Left ventricle myocardium inferior (tissue), 1 donor: ENCODE measurements at regions of chr5 and their contacts with region 1.

Region 1: DNA sequence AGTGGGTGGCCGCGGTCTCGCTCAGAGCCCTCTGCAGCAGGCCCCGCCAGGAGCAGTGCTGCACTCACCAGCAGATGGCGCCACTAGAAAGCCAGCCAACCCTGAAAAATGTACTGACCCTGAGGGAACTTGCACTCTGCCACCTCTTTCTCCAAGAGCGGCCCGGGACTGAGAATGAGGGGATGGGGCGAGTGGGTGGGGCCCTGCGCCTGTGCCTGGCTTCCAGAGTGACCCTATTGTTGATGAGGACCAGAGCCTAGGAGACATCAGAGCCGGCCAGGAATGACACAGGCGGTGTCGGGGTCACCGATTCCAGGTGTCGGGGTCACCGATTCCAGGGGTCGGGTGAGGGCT is 2.9 kb upstream of the IL17B start:
- DNase-seq: peak; percentile 81
- H3K4me3 ChIP-seq: peak overlapping the region; percentile 20
- H3K27ac ChIP-seq: peak overlapping the region; percentile 94
- H3K4me1 ChIP-seq: peaks cover 65% of the 10 kb centered on the region
- H3K27me3 ChIP-seq: no peaks in the 10 kb centered on the region
- CTCF ChIP-seq: peak; percentile 99

Region 2: GRCh38 chr5:149434162-149435014 is 52.4 kb after region 1 on chr5:
- intact Hi-C with region 1: loop called (anchors 2 kb)
- DNase-seq: no peak
- H3K4me3 ChIP-seq: no peak overlapping the region
- H3K27ac ChIP-seq: peak overlapping the region; percentile 95
- H3K4me1 ChIP-seq: peaks cover 49% of the 10 kb centered on the region
- H3K27me3 ChIP-seq: no peaks in the 10 kb centered on the region
- CTCF ChIP-seq: peak; percentile 94

Region 3: GRCh38 chr5:149567226-149567625 is 185.3 kb after region 1 on chr5:
- intact Hi-C with region 1: loop called (anchors 5 kb)
- DNase-seq: no peak
- H3K4me3 ChIP-seq: no peak overlapping the region
- H3K27ac ChIP-seq: no peak overlapping the region
- H3K4me1 ChIP-seq: peaks cover 24% of the 10 kb centered on the region
- H3K27me3 ChIP-seq: no peaks in the 10 kb centered on the region
- CTCF ChIP-seq: no peak